ENCODE measurements at regions of chr15 and their contacts with region 1.

Region 1: DNA sequence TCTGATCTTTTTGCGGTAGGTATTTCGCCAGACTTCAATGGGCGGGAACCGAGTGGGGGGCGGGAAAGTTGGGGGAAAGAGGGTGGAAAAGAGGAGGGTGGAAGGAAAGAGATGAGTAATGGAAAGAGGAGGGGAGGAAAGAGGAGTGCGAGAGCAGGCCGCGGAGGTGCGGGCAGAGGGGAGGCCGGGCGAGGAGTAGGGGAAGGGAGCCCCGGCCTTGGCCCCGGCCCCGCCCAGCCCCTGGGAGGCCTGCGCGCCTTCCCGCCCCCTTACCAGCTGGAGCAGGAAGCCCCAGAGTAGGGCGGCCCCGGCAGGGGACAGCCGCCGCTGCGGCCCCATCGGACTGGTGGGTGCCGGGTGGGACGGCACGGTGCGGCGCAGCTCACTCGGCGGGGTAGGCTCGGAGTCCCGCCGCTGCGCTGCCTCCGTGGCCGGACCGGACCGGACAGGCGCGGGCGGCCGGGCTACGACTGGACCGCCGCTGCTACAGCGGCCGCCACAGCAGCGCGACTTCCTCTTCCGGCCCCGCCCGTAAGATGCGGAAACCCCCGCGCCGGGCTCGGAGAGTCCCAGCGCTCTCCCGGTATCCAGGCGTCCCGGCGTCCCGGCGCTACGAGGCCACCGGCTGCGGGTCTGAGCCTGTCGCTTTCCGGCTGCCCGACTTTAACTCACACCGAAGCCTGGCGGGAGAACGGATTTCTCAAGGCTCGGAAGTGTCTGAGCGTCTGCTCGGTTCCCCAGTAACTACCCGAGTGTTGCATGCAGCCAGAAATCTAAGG is at the start of gene SPPL2A:
- DNase-seq: peak; percentile 95
- H3K4me3 ChIP-seq: peak within 1 kb of the TSS; percentile 80 to 94 (median 90)
- H3K27ac ChIP-seq: peak within 1 kb of the TSS; percentile 96 to 99 (median 98)
- H3K4me1 ChIP-seq: peaks cover 32 to 64% (median 50%) of the 10 kb centered on the region in 4 donors
- H3K27me3 ChIP-seq: no peaks in the 10 kb centered on the region
- CTCF ChIP-seq: no peak
- EP300 ChIP-seq: no peak
- POLR2A ChIP-seq: peak; percentile 87
- total RNA-seq, gene SPPL2A: 122 to 132 (median 128) TPM

Region 2: GRCh38 chr15:49887659-49888322 is 877.6 kb before region 1 on chr15:
- intact Hi-C with region 1: no loop called
- DNase-seq: no peak
- H3K4me3 ChIP-seq: no peak overlapping the region
- H3K27ac ChIP-seq: peak overlapping the region; percentile 40 to 55 (median 46)
- H3K4me1 ChIP-seq: peaks cover 2 to 21% (median 16%) of the 10 kb centered on the region in 4 donors
- H3K27me3 ChIP-seq: no peaks in the 10 kb centered on the region
- CTCF ChIP-seq: no peak
- EP300 ChIP-seq: no peak
- POLR2A ChIP-seq: no peak

Region 3: GRCh38 chr15:50686468-50687301 is 78.7 kb before region 1 on chr15 and contains the start of gene TRPM7:
- intact Hi-C with region 1: loop called (anchors 5 kb)
- DNase-seq: peak; percentile 96
- H3K4me3 ChIP-seq: peak within 1 kb of the TSS; percentile 58 to 95 (median 84)
- H3K27ac ChIP-seq: peak within 1 kb of the TSS; percentile 86 to 97 (median 96)
- H3K4me1 ChIP-seq: peaks cover 27 to 46% (median 43%) of the 10 kb centered on the region in 4 donors
- H3K27me3 ChIP-seq: no peaks in the 10 kb centered on the region
- CTCF ChIP-seq: peak in 1 of 3 experiments; percentile 21
- EP300 ChIP-seq: no peak
- POLR2A ChIP-seq: peak; percentile 41
- total RNA-seq, gene TRPM7: 27.9 to 39.9 (median 33.9) TPM

Region 4: DNA sequence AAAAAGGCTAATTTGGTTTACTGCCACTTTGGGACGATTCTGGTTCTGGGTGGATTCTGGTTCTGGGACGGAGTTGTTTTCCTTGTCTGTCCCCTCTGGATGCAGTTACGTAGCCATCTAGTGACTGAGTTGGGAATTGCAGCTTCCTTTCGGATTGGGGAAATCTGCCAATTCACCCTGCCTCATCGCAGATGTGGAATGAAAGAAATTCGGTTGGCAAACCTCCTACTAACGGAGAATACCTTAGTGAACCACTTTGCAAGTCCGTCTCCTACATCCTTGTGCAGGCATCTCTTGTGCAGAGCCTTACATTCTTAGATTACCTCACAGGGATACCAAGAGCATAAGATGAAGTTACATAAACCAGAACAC is 111.6 kb after region 1 on chr15:
- intact Hi-C with region 1: loop called (anchors 5 kb)
- DNase-seq: peak; percentile 95
- H3K4me3 ChIP-seq: peak overlapping the region; percentile 42 to 53 (median 46)
- H3K27ac ChIP-seq: peak overlapping the region in 2 of 4 donors; percentile 44 to 46
- H3K4me1 ChIP-seq: peaks cover 2 to 14% (median 11%) of the 10 kb centered on the region in 4 donors
- H3K27me3 ChIP-seq: no peaks in the 10 kb centered on the region
- CTCF ChIP-seq: peak in 2 of 3 experiments; percentile 95 to 97
- EP300 ChIP-seq: no peak
- POLR2A ChIP-seq: no peak

Measured in esophagus muscularis mucosa (tissue), 4 donors.